ENCODE measurements at regions of chr2 and their contacts with region 1.

Region 1: DNA sequence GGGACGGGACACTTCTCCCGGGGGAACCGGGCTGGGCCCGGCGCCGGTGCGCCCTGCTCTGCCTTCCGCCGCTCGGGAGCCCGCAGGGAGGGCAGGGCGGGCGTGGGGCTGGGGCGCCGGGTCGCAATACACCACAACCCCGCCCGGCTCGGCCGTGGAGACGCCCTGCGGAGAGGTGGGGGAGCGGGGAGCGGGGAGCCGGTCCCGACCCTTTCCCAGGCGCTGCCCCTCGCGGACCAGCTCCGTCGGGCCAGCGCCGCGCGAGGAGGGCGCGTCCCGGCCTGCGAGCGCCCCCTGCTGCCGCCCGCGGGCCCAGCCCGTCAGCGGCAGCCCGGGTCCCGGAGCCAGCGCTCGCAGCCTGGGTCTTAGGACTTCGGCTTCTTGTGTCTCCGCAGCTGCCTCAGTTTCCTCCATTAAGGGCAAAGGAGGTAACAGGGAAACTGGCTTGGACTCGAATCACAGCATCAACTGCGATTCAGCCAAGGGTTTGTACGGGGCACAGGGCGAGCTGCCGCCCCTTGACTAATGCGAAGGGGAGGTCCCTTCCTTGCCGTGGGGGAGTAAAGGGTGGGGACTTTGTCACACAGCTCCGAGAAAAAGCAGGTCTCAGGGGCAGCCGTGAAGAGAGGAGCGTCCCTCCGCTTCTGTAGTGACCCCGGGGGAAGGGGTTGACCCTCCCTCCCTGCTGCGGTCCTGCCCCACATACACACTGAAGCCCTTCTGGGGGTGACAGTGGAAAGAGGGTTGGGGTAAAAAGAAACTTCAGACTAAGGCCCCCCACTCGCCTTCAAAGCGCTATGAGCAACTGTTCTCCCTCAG is 717 bp upstream of the ADRA2B start:
- DNase-seq: peak; percentile 40 to 85
- ATAC-seq: peak; percentile 78 to 88
- H3K4me3 ChIP-seq: peak overlapping the region; percentile 69
- H3K27ac ChIP-seq: peak overlapping the region; percentile 56 to 78; a peak in 5 of 6 replicates
- H3K4me1 ChIP-seq: peaks cover 4% of the 10 kb centered on the region; the same call in 2 of the 3 replicates
- CTCF ChIP-seq: peak; percentile 97
- EP300 ChIP-seq: no peak
- POLR2A ChIP-seq: no peak
- RAD21 ChIP-seq: peak; percentile 36 to 91; a peak in 4 of 5 replicates

Region 2: DNA sequence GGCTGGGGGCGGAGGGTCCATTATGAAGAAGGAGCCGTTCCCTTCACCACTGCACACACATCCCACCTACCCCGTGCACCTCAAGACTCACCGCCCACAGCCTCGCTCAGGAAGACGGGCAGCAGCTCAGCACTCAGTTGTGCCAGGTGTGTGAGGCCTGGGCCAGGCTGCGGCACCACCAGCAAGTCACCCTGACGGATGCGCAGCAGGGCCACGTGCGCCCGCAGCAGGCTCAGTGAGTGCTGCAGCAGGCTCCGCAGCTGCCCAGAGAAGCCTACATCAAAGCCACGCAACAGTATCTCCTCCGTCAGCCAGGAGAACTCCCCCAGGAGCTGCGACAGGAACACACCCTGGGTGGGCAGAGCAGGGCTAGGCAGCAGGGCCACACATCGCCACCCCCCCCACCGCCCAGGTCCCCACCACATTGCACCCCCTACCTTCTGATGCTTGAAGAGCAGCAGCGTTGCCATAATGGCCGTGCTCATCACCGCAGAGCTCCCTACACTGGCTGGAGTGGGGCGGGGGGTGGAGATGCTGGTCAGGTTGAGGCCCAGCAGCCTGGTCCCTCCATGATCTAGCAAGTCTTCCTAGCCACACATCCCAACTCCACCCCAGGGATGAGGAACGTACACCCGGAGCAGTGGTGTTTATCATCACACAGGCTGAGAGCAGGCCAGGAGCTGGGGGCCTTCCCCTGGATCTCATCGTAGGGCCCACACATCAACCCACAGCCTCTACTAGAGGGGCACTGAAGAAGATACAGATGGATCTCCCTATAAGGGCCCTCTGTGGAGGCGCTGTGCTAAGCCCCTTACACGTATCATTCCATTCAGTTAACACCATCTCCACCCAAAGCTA is 92.5 kb before region 1 on chr2:
- CTCF ChIA-PET with region 1: interaction called, 27 read pairs
- POLR2A ChIA-PET with region 1: no interaction called
- DNase-seq: no peak
- ATAC-seq: no peak
- H3K4me3 ChIP-seq: no peak overlapping the region
- H3K27ac ChIP-seq: no peak overlapping the region
- H3K4me1 ChIP-seq: no peaks in the 10 kb centered on the region
- CTCF ChIP-seq: no peak
- EP300 ChIP-seq: no peak
- POLR2A ChIP-seq: no peak
- RAD21 ChIP-seq: no peak

Region 3: GRCh38 chr2:96091533-96092334 is 25.4 kb before region 1 on chr2:
- CTCF ChIA-PET with region 1: interaction called, 126 read pairs
- POLR2A ChIA-PET with region 1: no interaction called
- DNase-seq: no peak
- ATAC-seq: peak in 1 of 2 experiments; percentile 42; a peak in 3 of 6 replicates
- H3K4me3 ChIP-seq: no peak overlapping the region
- H3K27ac ChIP-seq: no peak overlapping the region
- H3K4me1 ChIP-seq: peaks cover 12% of the 10 kb centered on the region; the same call in 1 of the 3 replicates
- CTCF ChIP-seq: no peak
- EP300 ChIP-seq: no peak
- POLR2A ChIP-seq: no peak
- RAD21 ChIP-seq: no peak

Region 4: GRCh38 chr2:96131152-96131812 is 14.2 kb after region 1 on chr2:
- CTCF ChIA-PET with region 1: interaction called, 35 read pairs
- POLR2A ChIA-PET with region 1: no interaction called
- DNase-seq: no peak
- ATAC-seq: no peak
- H3K4me3 ChIP-seq: no peak overlapping the region
- H3K27ac ChIP-seq: no peak overlapping the region
- H3K4me1 ChIP-seq: no peaks in the 10 kb centered on the region
- CTCF ChIP-seq: no peak
- EP300 ChIP-seq: no peak
- POLR2A ChIP-seq: no peak
- RAD21 ChIP-seq: no peak

Region 5: DNA sequence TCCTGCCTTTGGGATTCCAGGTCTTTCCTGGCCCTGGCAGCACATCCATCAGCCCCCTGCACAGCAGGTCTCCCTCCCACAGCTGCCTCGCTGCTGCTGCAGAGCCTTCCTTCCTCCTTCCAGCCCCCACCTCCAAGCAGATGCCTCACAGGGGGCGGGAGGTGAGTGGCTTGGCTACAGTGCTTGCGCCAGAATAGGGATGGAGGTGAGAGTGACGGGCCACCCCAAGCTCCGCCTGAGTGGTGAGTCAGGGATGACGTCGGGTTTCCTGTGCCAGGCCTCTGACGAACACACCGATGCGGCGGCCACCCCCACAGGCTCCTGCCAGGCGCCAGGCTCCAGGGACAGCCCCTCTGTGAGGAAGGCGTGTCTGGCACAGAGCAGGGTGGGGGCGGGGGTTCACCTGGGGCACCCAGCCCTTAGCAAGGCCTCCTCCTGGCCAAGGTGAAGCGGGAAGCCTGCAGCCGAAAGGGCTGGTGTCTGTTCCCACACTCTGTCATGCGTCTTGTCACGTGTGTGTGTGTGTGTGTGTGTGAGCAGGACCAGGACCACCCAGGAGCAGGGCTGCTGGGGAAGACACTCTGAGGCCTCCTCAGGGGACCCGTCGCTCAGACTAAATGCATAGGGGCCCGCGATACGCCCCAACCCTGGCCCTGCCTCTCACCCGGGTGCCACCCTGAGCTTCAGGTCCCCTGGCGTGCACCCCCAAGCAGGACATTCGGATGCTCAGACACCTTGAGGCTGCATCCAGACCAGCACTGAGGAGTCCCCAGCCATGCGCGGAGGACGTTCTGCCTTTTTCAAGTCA is 31.5 kb after region 1 on chr2:
- CTCF ChIA-PET with region 1: interaction called, 10 read pairs
- POLR2A ChIA-PET with region 1: no interaction called
- DNase-seq: peak; percentile 25 to 78
- ATAC-seq: peak; percentile 73 to 78
- H3K4me3 ChIP-seq: no peak overlapping the region
- H3K27ac ChIP-seq: peak overlapping the region in 1 of 2 experiments; percentile 57; a peak in 2 of 6 replicates
- H3K4me1 ChIP-seq: peaks cover 10% of the 10 kb centered on the region; the same call in 2 of the 3 replicates
- CTCF ChIP-seq: no peak
- EP300 ChIP-seq: no peak
- POLR2A ChIP-seq: no peak
- RAD21 ChIP-seq: no peak

Region 6: DNA sequence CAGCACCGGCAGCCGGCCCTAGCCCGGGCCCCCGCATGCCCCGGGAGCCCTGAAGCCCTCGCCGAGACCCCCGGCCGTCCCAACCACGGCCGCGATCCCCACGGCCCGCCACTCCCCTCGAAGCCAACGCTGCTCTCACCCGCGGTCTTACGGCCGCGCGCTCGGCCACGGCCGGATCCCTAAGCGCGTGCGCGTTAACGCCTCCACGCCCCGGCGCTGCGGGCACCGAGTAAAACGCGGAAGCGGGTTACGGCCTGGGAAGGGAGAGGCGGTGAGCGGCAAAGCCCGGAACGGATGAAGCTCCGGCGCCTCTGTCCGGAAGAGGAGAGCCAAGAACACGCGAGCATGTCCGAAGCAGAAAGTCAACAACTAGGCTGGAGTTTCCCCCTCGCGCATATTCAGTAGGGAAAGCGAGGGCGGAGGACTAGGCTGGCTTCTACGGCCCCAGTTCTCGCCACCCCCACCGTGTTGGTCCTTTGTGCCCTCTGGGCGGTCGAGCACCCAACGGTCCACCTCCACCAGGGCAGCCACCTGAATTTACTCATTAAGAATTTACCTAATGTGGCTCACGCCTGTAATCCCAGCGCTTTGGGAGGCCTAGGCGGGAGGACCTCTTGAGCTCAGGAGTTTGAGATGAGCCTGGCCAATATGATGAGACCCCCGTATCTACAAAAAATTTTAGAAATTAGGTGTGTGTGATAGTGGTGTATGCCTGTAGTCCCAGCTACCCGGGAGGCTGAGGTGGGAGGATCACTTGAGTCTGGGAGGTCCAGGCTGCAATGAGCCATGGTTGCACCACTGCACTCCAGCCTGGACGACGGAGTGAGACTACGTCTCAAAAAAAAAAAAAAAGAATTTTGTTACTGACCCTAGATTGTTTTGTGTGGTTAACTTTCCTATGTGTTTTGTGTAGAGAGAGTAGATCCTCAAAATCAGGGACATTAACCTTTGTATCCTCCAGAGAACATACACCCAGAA is 521.3 kb after region 1 on chr2 and contains the start of gene KANSL3:
- CTCF ChIA-PET with region 1: no interaction called
- POLR2A ChIA-PET with region 1: no interaction called
- DNase-seq: peak; percentile 66 to 95
- ATAC-seq: peak; percentile 79 to 86
- H3K4me3 ChIP-seq: peak within 1 kb of the TSS; percentile 52
- H3K27ac ChIP-seq: peak within 1 kb of the TSS; percentile 94 to 98
- H3K4me1 ChIP-seq: peaks cover 29% of the 10 kb centered on the region; the same call in 2 of the 3 replicates
- CTCF ChIP-seq: no peak
- EP300 ChIP-seq: 0 out of 5 replicates have a peak, but pooled peaks of 1 of the 2 experiments have one; percentile 37
- POLR2A ChIP-seq: peak; percentile 80
- RAD21 ChIP-seq: peak; percentile 28 to 47; a peak in 4 of 5 replicates
- polyA plus RNA-seq, gene KANSL3: 23.0 and 33.1 TPM in 2 replicates

Measured in A549 (cell line).